A549 (cell line): ENCODE measurements at regions of chr16 and their contacts with region 1.

Region 1: GRCh38 chr16:4261557-4262172 is 11.2 kb downstream of the TFAP4 start:
- DNase-seq: peak; percentile 54 to 78
- ATAC-seq: peak; percentile 55 to 81; a peak in 5 of 6 replicates
- H3K4me3 ChIP-seq: no peak overlapping the region
- H3K27ac ChIP-seq: no peak overlapping the region
- H3K4me1 ChIP-seq: peaks cover 9% of the 10 kb centered on the region; the same call in 1 of the 3 replicates
- CTCF ChIP-seq: peak; percentile 69
- EP300 ChIP-seq: no peak
- POLR2A ChIP-seq: no peak
- RAD21 ChIP-seq: peak; percentile 64 to 67

Region 2: DNA sequence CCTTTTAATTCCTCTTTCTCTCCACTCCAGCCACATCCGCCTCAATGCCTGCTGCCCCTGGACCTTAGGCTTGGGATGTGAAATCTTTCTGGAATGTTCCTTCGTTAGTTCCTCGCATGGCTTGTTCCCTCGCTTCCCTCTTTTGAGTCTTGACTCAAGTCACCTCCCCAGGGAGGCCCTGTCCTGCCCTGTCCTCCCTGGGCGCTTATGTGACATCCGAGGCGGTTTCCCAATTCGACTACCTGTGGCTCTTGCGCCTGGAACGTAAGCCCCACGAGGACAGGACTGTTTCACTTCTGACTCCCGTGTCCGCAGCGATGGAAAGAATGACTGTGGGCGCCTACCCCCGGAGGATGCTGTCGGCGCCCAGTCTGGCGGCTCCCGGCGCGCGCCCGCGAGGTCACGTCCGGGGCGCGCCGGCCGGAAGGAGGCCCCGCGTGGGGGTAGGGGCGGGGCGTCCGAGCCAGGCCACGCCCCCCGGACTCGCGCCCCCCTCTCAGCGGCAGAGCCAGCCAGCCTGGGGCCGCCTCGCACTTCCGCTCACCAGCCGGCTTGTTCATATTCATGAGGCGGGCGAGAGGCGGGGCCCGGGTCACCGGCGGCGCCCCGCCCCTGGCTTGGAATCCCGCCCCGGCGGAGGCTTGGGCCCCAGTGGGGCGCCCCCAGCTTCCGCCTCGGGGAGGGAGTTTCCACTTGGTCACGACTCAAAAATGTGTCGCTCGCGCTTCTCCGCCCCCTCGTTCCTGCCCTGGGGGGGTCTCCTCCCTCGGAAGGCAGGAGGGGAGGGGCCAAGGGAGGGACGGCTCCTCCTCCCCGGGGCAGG is 45.8 kb after region 1 on chr16:
- CTCF ChIA-PET with region 1: interaction called, 36 read pairs
- POLR2A ChIA-PET with region 1: no interaction called
- DNase-seq: peak; percentile 87 to 96
- ATAC-seq: peak; percentile 86 to 87
- H3K4me3 ChIP-seq: peak overlapping the region; percentile 88
- H3K27ac ChIP-seq: peak overlapping the region; percentile 90 to 93
- H3K4me1 ChIP-seq: peaks cover 35% of the 10 kb centered on the region
- CTCF ChIP-seq: no peak
- EP300 ChIP-seq: peak in 1 of 2 experiments; percentile 61; a peak in 1 of 5 replicates
- POLR2A ChIP-seq: peak; percentile 53
- RAD21 ChIP-seq: no peak; a peak in 1 of 5 replicates